ENCODE measurements at regions of chr20 and their contacts with region 1.

Region 1: GRCh38 chr20:58481481-58482021 is 33.6 kb downstream of the APCDD1L start:
- DNase-seq: peak; percentile 27
- ATAC-seq: peak; percentile 98
- H3K4me3 ChIP-seq: no peak overlapping the region
- H3K27ac ChIP-seq: no peak overlapping the region
- H3K4me1 ChIP-seq: peaks cover 6 to 12% of the 10 kb centered on the region in 2 experiments
- H3K27me3 ChIP-seq: no peaks in the 10 kb centered on the region
- CTCF ChIP-seq: peak; percentile 77 to 80 (median 79)
- POLR2A ChIP-seq: no peak
- RAD21 ChIP-seq: peak; percentile 90

Region 2: GRCh38 chr20:58330687-58331086 is 150.9 kb before region 1 on chr20:
- CTCF ChIA-PET with region 1: no interaction called
- POLR2A ChIA-PET with region 1: no interaction called
- RAD21 ChIA-PET with region 1: no interaction called
- intact Hi-C with region 1: no loop called
- DNase-seq: no peak
- ATAC-seq: no peak
- H3K4me3 ChIP-seq: no peak overlapping the region
- H3K27ac ChIP-seq: no peak overlapping the region
- H3K4me1 ChIP-seq: no peaks in the 10 kb centered on the region
- H3K27me3 ChIP-seq: no peaks in the 10 kb centered on the region
- CTCF ChIP-seq: no peak
- POLR2A ChIP-seq: no peak
- RAD21 ChIP-seq: no peak

Region 3: DNA sequence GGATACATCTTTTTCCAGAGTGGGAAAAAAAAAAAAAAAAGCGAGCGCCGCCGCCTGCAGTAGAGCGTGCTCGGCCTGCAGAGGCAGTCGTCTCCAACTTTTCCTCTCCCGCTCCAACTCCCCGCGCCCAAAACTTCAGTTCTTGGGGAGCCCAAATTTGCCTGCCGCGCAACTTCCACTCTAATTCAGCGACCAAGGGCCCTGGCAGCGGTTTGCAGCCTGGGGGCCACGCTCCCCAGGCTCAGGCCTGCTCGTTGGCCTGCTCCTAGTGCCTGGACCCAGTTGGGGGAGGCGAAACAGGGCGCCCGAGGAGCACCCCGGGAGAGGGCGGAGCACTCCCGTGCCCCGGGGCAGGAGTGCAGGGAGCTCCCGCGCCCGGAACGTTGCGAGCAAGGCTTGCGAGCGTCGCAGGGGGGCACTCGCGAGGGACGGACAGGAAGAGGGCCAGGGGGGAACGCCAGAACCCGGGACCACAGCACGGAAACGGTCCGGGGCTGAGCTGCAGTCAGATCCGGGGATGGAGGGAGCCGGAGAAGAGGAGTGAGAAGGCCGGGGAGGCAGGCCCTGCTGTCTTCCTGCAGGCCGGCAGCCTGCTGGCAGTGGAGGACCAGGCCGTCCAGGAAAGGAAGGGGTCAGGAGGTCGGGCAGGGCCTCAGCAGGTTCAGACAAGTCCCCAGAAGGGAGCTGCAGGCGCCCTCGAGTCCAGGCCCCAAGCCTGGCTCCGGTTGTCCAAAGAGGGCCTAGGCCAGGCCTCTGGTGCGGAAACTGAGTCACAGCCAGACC is 169.4 kb after region 1 on chr20 and contains the start of gene STX16:
- CTCF ChIA-PET with region 1: interaction called, 20 read pairs
- POLR2A ChIA-PET with region 1: no interaction called
- RAD21 ChIA-PET with region 1: interaction called, 3 to 7 read pairs
- intact Hi-C with region 1: loop called (anchors 5 kb)
- DNase-seq: peak; percentile 82
- ATAC-seq: peak; percentile 92
- H3K4me3 ChIP-seq: peak within 1 kb of the TSS; percentile 95 to 100
- H3K27ac ChIP-seq: peak within 1 kb of the TSS; percentile 77
- H3K4me1 ChIP-seq: peaks cover 3 to 12% of the 10 kb centered on the region in 2 experiments; a peak in 3 of 4 replicates
- H3K27me3 ChIP-seq: no peaks in the 10 kb centered on the region
- CTCF ChIP-seq: peak; percentile 52 to 76 (median 63)
- POLR2A ChIP-seq: no peak
- RAD21 ChIP-seq: peak; percentile 49
- total RNA-seq, gene STX16: 55.1 TPM

Region 4: GRCh38 chr20:58839474-58839874 is 357.9 kb after region 1 on chr20:
- CTCF ChIA-PET with region 1: interaction called, 33 read pairs
- POLR2A ChIA-PET with region 1: no interaction called
- RAD21 ChIA-PET with region 1: interaction called, 5 to 11 read pairs
- intact Hi-C with region 1: loop called (anchors 1 kb)
- DNase-seq: peak; percentile 7
- ATAC-seq: peak; percentile 89
- H3K4me3 ChIP-seq: no peak overlapping the region
- H3K27ac ChIP-seq: no peak overlapping the region
- H3K4me1 ChIP-seq: no peaks in the 10 kb centered on the region
- H3K27me3 ChIP-seq: peaks cover 12% of the 10 kb centered on the region; the same call in 1 of the 2 replicates
- CTCF ChIP-seq: peak; percentile 30 to 48 (median 41); a peak in 4 of 6 replicates
- POLR2A ChIP-seq: no peak
- RAD21 ChIP-seq: peak; percentile 66

Region 5: GRCh38 chr20:59222253-59223181 is 741.0 kb after region 1 on chr20:
- CTCF ChIA-PET with region 1: interaction called, 6 read pairs
- POLR2A ChIA-PET with region 1: no interaction called
- RAD21 ChIA-PET with region 1: no interaction called
- intact Hi-C with region 1: loop called (anchors 10 kb)
- DNase-seq: peak; percentile 33
- ATAC-seq: peak; percentile 97
- H3K4me3 ChIP-seq: peak overlapping the region; percentile 23 to 41
- H3K27ac ChIP-seq: no peak overlapping the region
- H3K4me1 ChIP-seq: peaks cover 0 to 10% of the 10 kb centered on the region in 2 experiments; a peak in 1 of 4 replicates
- H3K27me3 ChIP-seq: peaks cover 34% of the 10 kb centered on the region
- CTCF ChIP-seq: peak; percentile 78 to 97 (median 90)
- POLR2A ChIP-seq: no peak
- RAD21 ChIP-seq: peak; percentile 81

Region 6: DNA sequence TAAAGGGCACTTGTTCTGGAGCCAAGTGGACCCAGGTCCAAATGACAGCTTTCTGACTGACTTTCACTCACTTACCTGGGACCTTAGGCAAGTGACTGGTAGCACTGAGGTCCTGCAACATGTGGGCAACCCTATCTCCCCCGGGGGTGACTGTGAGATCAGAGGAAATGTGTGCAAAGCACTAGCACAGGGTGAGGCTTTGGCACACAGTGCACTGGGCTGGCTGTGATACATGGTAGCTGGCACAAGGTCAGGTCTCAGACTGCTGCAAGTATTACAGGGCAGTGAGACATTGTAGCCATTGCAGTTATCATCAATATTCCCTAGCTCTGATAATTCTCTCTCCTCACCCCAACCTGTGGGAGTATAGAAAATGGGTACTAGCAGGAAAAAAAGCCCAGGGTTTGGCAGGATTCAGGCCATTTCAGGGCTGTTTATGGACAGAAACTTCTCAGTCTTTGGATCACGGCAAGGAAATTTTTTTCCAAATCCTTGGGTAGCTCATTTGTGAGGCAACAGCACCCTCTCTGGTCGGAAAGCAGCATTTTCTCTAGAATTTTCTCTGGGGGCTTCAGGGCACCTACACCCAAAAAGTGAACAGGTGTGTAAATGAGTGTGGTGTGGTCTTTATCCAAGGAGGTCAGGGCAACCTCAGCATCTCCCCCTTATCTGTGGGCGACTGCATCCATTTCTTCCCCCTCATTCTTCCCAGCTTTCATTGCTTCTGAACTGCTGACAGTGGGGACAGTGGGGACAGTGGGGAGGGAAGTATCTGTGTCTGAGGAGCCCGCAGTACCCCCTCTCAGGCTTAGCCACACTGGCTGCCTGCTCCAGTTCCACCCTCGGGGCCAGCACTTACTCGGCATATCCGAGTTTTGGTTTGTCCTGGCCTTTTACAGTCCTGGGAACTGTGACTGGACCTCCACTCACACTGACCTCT is 974.1 kb after region 1 on chr20:
- CTCF ChIA-PET with region 1: interaction called, 16 read pairs
- POLR2A ChIA-PET with region 1: no interaction called
- RAD21 ChIA-PET with region 1: interaction called in 1 of 2 experiments, 3 read pairs
- intact Hi-C with region 1: no loop called
- DNase-seq: peak; percentile 3
- ATAC-seq: peak; percentile 78
- H3K4me3 ChIP-seq: no peak overlapping the region
- H3K27ac ChIP-seq: no peak overlapping the region
- H3K4me1 ChIP-seq: 0 out of 4 replicates have a peak, but pooled peaks cover 0 to 4% of the 10 kb centered on the region in 2 experiments
- H3K27me3 ChIP-seq: peaks cover 11% of the 10 kb centered on the region; the same call in 1 of the 2 replicates
- CTCF ChIP-seq: peak; percentile 47 to 70 (median 60); a peak in 5 of 6 replicates
- POLR2A ChIP-seq: no peak
- RAD21 ChIP-seq: peak; percentile 70